ENCODE measurements at regions of chr6 and their contacts with region 1.

Region 1: DNA sequence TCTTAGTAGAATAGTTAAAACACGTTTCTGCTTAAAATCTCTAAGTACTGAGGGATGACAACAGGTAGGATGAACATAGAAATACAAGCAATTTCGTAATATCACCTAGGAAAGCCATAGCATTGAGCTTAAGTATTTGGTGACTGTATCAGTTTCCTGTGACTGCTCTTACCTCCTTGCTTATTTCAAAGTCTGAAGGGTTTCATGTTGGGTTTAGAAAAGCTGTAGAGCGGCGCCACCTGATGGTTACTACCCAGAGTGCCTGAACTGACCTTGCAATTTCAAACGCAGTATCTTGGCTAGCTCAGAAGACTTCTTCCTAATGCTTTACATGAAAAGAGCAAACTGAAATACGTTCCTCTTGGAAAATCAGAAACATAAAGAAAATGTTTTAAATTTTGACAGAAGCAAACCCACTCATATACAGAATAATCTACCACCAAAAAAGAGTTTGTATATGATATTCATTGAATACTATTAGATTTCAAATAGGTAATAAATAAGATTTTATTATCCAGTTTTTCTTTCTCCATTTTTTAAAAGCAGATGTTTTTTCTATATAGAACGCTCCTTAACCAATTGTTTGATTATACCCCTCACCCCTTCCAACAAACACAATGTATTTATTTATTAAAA is 82.3 kb upstream of the RIPOR2 start:
- DNase-seq: peak; percentile 87
- ATAC-seq: peak; percentile 89
- H3K4me3 Mint-ChIP-seq: no peak overlapping the region
- H3K27ac Mint-ChIP-seq: peak overlapping the region; percentile 39
- H3K4me1 Mint-ChIP-seq: peaks cover 33% of the 10 kb centered on the region
- H3K27me3 Mint-ChIP-seq: no peaks in the 10 kb centered on the region

Region 2: DNA sequence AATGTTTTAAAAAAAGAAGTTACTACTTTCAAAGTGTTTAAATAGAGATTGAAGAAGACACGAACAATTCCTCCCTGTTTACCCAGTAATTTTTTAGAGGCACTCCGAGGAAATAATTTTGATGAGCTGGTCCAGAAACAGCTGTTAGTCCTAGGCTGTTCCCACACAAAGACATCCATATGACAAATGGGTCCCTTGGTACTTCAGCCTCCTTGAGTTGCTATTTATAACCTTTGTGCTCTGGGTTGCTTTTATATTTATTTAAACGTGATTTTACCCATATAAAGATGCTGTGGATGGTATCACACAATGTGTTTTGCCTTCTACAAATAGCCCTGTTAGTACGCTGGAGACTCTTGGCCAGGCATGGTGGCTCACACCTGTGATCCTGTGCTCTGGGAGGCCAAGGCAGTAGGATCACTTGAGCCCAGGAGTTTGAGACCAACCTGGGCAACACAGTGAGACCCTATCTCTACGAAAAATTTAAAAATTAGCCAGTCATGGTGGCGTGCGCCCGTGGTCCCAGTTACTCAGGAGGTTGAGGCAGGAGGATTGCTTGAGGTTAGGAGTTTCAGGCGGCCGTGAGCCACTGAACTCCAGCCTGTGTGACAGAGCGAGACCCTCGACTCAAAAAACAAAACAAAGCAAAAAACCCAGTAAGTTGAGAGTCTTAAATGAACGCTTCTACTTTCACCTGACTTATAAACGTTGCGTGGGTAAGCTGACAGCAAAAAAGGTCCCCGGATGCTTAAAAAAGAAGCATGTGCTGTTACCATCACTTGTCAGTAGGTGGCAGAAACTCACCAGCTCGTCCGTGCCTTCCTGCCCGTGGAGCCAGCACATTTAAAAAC is 162.4 kb before region 1 on chr6:
- CTCF ChIA-PET with region 1: interaction called, 119 read pairs
- DNase-seq: peak; percentile 78
- ATAC-seq: peak; percentile 60
- H3K4me3 Mint-ChIP-seq: no peak overlapping the region
- H3K27ac Mint-ChIP-seq: peak overlapping the region; percentile 88
- H3K4me1 Mint-ChIP-seq: peaks cover 52% of the 10 kb centered on the region
- H3K27me3 Mint-ChIP-seq: no peaks in the 10 kb centered on the region

Region 3: DNA sequence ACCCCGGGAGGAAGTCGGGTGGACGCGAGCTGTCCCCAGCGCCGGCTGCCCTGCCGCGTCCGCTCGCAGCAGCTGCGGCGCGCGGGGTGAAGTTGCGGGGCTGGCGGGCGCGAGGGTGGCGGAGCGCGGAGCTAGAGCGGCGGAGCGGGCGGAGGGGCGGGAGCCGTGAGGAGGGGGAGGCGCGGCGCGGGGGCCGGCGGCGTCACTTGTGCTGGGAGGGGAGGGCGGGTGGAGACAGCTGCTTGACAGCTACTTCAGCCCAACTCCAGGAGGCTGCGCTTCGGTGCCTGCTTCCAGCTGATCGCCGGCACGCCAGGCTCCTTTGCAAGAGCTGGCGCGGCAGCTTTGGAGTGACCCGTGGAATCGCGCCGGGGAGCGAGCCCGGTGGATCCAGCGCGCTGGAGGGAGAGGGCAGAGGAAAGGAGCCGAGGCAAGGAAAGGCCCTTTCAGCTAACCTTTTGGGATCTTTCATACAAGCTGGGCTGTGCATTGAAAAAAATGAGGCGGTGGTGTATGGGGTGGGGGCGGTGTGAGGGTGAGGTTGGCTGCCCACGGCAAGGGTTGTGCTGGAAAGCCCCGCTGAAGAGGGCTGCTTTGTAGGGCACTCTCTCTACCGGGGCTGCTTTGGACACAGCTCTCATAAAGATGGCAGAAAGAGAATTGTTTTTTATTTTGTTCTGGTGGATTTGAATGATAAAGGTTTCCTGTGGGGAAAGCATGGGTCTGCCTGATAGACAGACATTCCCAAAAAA is 106.9 kb before region 1 on chr6:
- CTCF ChIA-PET with region 1: interaction called, 11 read pairs
- DNase-seq: peak; percentile 60
- ATAC-seq: peak; percentile 59
- H3K4me3 Mint-ChIP-seq: peak overlapping the region; percentile 79
- H3K27ac Mint-ChIP-seq: peak overlapping the region; percentile 75
- H3K4me1 Mint-ChIP-seq: peaks cover 74% of the 10 kb centered on the region
- H3K27me3 Mint-ChIP-seq: no peaks in the 10 kb centered on the region

Region 4: DNA sequence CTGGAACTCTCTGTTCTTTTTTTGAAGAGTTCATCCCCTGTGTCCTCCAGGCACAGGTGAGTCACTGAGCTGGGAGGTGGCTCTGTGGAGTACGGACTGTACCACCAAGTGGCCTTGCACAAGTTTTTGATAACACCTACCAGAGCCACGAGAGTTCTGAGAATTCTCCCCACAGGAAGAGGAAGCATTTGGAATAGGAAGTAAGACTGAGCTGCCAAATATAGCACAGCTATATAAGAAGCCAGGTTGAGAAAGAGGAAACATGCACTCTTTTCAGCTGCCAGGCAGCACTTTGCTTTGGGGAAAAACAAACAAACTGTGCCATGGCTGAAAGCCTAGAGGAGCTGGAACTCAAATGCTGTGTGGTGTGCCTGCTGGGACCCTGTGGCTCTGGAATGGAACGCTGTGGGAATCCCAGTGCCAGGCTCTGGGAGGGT is 11.5 kb before region 1 on chr6:
- CTCF ChIA-PET with region 1: interaction called, 33 read pairs
- DNase-seq: peak; percentile 85
- ATAC-seq: peak; percentile 79
- H3K4me3 Mint-ChIP-seq: peak overlapping the region; percentile 38
- H3K27ac Mint-ChIP-seq: peak overlapping the region; percentile 96
- H3K4me1 Mint-ChIP-seq: peaks cover 66% of the 10 kb centered on the region
- H3K27me3 Mint-ChIP-seq: no peaks in the 10 kb centered on the region

Region 5: GRCh38 chr6:25035527-25036435 is 17.7 kb after region 1 on chr6:
- CTCF ChIA-PET with region 1: interaction called, 12 read pairs
- DNase-seq: peak; percentile 65
- ATAC-seq: peak; percentile 56
- H3K4me3 Mint-ChIP-seq: peak overlapping the region; percentile 83
- H3K27ac Mint-ChIP-seq: peak overlapping the region; percentile 95
- H3K4me1 Mint-ChIP-seq: peaks cover 60% of the 10 kb centered on the region
- H3K27me3 Mint-ChIP-seq: no peaks in the 10 kb centered on the region

Region 6: DNA sequence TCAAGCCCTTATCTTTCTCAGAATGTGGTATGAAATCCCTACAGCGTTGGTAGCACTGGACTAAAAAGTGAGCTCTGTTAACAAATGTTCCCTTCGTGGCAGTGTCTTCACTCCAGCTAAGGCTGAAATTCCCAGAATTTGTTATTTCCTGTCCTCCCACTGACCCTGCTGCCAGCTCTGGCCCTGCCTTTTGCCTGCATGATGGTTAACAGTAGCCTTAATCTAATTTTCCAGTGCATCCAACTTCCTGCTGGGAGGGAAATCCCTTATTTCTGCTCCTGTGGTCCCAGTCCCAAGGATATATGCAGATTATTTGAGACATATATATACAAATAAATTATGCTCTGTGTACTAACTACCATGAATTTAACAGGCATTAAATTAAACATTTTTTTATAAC is 104.0 kb after region 1 on chr6:
- CTCF ChIA-PET with region 1: no interaction called
- DNase-seq: no peak
- ATAC-seq: no peak
- H3K4me3 Mint-ChIP-seq: no peak overlapping the region
- H3K27ac Mint-ChIP-seq: no peak overlapping the region
- H3K4me1 Mint-ChIP-seq: peaks cover 62% of the 10 kb centered on the region
- H3K27me3 Mint-ChIP-seq: no peaks in the 10 kb centered on the region

Measured in activated CD8-positive, alpha-beta memory T cell treated with anti-CD3 and anti-CD28 coated beads, Interleukin-2, amount 10 ng/mL, durations not matched to agents 7 days and 5 days (primary cell).